Activated naive CD4-positive, alpha-beta T cell treated with anti-CD3 and anti-CD28 coated beads for 36 hours (primary cell): ENCODE measurements at regions of chr10 and their contacts with region 1.

Region 1: DNA sequence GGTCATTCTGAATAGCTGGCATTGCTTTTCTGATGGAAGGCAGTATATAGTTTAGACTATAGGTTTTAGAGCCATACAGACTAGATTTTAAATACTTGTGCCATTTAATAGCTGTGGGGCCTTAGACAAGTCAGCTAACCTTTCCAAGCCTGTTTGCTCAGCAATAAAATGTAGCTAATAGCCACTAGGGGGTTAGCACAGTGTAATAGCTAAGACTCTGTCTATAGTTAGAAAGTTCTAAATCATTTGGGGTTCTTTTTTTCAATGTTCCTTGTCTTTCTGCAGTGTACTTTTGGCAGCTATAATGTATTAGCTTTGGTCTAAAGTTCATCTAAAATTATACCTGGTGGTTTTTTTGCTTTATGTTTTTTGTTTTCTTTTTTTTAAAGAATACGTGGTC is 7.5 kb upstream of the KIFBP start:
- DNase-seq: no peak
- H3K4me3 Mint-ChIP-seq: no peak overlapping the region
- H3K27ac Mint-ChIP-seq: no peak overlapping the region
- H3K4me1 Mint-ChIP-seq: no peaks in the 10 kb centered on the region
- H3K27me3 Mint-ChIP-seq: no peaks in the 10 kb centered on the region

Region 2: DNA sequence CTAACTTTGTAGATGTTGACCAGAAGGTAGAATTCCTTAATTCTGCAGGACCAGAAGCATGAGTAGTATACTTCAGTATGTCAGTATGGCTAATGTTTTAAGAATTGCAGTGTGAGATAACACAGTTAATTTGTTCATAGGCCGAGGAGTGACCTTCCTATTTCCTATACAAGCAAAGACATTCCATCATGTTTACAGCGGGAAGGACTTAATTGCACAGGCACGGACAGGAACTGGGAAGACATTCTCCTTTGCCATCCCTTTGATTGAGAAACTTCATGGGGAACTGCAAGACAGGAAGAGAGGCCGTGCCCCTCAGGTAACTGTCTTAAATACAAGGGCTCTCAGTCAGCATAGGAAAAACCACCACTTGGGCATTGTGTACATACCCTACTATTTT is 17.9 kb before region 1 on chr10:
- CTCF ChIA-PET with region 1: interaction called, 4 read pairs
- intact Hi-C with region 1: loop called (anchors 2 kb)
- DNase-seq: no peak
- H3K4me3 Mint-ChIP-seq: no peak overlapping the region
- H3K27ac Mint-ChIP-seq: no peak overlapping the region
- H3K4me1 Mint-ChIP-seq: peaks cover 41% of the 10 kb centered on the region
- H3K27me3 Mint-ChIP-seq: no peaks in the 10 kb centered on the region